Posterior vena cava (tissue), 2 donors: ENCODE measurements at regions of chr5 and their contacts with region 1.

Region 1: DNA sequence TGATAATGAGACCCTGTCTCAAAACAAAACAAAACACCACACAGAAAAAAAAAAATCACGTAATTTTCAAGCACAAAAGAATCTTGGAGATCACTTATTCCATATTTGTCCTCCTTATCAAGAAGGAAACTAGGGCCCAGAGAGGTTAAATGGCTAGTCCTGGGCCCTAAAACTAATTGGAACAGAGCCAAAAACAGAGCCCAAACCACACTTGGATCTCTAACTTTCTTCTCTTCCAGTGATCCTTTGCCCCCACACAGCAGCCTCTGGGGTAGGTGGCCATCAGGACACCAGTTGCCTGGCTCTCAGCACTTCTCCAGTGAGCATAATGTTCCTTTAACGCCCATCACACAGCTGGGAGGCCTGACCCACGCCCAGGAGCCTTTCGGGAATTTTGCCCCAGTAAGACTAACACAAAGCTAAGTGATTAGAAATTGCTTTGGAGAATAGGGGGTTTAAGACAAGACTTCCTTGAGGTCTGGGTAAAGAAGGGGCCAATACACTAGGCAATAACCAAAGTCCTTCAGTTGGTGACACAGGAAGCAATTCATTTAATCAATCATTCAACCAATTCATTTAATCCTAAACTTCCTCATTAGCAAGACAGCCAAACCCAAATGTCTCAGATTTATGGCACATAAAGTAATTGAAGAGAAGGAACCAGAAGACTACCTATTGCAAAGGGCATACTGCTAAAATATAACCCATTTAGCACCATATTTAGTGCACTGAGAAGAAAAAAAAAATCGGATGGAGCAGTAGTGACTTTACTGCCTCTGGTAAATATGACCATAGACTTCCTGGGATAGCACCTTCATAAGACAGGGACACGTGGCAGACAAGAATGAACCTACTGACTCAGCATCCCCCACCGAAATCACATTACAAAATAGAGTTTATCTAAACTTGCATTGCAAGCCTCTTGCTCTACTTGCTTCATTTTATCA is 77.8 kb downstream of the ZNF608 start:
- DNase-seq: no peak

Region 2: GRCh38 chr5:124692324-124692723 is 23.7 kb after region 1 on chr5:
- intact Hi-C with region 1: loop called in 1 of 2 experiments (anchors 1 kb)
- DNase-seq: no peak

Region 3: GRCh38 chr5:125113328-125113727 is 444.7 kb after region 1 on chr5:
- intact Hi-C with region 1: no loop called
- DNase-seq: no peak